Activated CD4-positive, alpha-beta memory T cell treated with anti-CD3 and anti-CD28 coated beads for 36 hours (primary cell): ENCODE measurements at regions of chr12 and their contacts with region 1.

Region 1: GRCh38 chr12:9647825-9648700 is 21.4 kb upstream of the CLEC2D start:
- DNase-seq: peak; percentile 96
- H3K4me3 Mint-ChIP-seq: peak overlapping the region; percentile 85
- H3K27ac Mint-ChIP-seq: peak overlapping the region; percentile 97
- H3K4me1 Mint-ChIP-seq: peaks cover 53% of the 10 kb centered on the region
- H3K27me3 Mint-ChIP-seq: peaks cover 2% of the 10 kb centered on the region

Region 2: GRCh38 chr12:9634177-9634803 is 13.8 kb before region 1 on chr12:
- CTCF ChIA-PET with region 1: interaction called, 6 read pairs
- POLR2A ChIA-PET with region 1: interaction called, 3 read pairs
- intact Hi-C with region 1: loop called (anchors 1 kb)
- DNase-seq: peak; percentile 81
- H3K4me3 Mint-ChIP-seq: no peak overlapping the region
- H3K27ac Mint-ChIP-seq: peak overlapping the region; percentile 66
- H3K4me1 Mint-ChIP-seq: peaks cover 60% of the 10 kb centered on the region
- H3K27me3 Mint-ChIP-seq: no peaks in the 10 kb centered on the region

Region 3: DNA sequence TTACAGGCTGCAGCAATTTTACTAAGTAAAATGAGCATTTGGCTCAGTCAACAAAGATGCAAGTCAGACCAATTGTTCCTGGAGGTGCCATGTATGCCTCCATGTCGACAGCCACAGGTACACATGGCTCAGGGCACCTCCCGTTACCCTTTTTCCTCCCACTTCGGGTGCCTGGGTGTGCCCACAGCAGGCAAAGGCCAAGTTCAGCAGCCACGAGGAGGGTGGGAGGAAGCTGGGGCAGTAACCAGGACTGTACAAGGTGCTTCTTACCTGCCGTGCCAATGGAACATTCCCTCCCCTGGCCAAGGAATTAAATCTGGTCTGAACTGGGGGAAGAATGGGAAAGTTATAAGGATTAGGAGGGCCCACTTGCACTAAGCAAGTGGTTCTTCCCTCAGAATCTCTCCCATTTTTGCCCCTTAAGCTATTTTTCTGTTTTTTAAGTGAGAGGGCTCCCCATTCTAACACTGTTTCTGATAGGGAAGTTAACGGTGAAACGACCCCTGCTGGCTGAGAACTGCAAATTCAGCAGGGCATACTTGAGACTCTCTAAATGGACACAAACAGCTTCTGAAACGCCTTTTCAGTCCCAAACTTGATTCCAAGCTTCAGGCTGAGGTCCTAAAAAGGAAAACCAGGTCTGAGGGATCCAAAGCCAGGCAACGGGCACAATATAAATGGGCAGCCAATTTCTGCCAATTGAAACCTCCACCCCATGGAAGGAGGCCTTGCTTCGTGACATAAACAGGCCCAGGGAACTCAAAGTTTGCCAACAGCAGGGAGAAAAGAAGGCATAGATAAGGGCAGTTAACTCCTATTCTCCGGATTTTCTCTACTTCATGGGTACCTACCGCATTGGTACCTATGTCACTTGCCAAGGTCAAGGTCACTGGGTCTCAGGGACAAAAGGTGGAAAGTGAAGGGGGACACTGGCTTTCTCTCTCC is 60.1 kb after region 1 on chr12:
- CTCF ChIA-PET with region 1: interaction called, 13 read pairs
- POLR2A ChIA-PET with region 1: interaction called, 4 read pairs
- intact Hi-C with region 1: no loop called
- DNase-seq: peak; percentile 81
- H3K4me3 Mint-ChIP-seq: peak overlapping the region; percentile 62
- H3K27ac Mint-ChIP-seq: peak overlapping the region; percentile 85
- H3K4me1 Mint-ChIP-seq: peaks cover 40% of the 10 kb centered on the region
- H3K27me3 Mint-ChIP-seq: no peaks in the 10 kb centered on the region

Region 4: DNA sequence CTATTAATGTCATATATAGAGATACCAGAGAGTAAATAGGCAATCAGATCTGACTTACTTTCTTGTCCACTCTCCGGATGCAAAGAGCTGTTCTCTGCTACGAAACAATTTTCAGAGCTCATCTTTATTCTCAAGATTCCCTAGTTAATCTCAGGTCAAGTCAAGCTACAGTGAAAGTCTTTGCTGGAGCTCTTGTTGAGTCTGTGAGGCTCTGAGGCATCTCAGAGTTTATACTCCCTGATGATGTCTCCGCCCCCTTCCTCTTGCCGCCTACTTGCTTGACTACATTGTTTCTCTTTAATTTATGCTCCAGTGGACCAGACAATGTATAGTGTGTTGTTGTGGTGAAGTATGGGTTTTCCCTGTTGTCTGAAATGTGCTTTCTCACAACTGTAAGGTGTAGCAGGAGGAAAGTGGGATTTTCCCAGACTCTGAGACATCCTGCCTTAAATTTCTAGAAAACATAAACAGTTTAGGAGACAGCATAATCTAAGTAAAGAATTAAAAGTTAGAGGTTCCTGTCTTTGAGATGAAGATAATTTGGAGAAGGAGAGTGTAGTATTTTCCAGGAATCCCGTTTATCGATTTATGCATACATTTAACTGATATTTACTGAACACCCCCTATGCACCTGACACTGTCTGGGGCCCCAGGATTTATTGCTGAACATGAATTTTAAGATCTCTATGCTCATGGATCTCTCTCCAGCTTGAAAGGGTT is 112.8 kb after region 1 on chr12 and contains the start of gene CD69:
- CTCF ChIA-PET with region 1: interaction called, 4 read pairs
- POLR2A ChIA-PET with region 1: interaction called, 114 read pairs
- intact Hi-C with region 1: loop called (anchors 1 kb)
- DNase-seq: peak; percentile 90
- H3K4me3 Mint-ChIP-seq: peak within 1 kb of the TSS; percentile 100
- H3K27ac Mint-ChIP-seq: peak within 1 kb of the TSS; percentile 99
- H3K4me1 Mint-ChIP-seq: peaks cover 52% of the 10 kb centered on the region
- H3K27me3 Mint-ChIP-seq: peaks cover 2% of the 10 kb centered on the region
- total RNA-seq, gene CD69: 118 to 120 TPM

Region 5: GRCh38 chr12:9869307-9870161 is 221.5 kb after region 1 on chr12 and contains the start of gene CLEC2B:
- CTCF ChIA-PET with region 1: no interaction called
- POLR2A ChIA-PET with region 1: interaction called, 7 read pairs
- intact Hi-C with region 1: loop called (anchors 5 kb)
- DNase-seq: peak; percentile 41
- H3K4me3 Mint-ChIP-seq: peak within 1 kb of the TSS; percentile 82
- H3K27ac Mint-ChIP-seq: peak within 1 kb of the TSS; percentile 93
- H3K4me1 Mint-ChIP-seq: peaks cover 19% of the 10 kb centered on the region
- H3K27me3 Mint-ChIP-seq: no peaks in the 10 kb centered on the region
- total RNA-seq, gene CLEC2B: 12.6 to 13.7 TPM